ENCODE measurements at regions of chr12 and their contacts with region 1.

Region 1: GRCh38 chr12:116708826-116709756 is 28.8 kb downstream of the SPRING1 start:
- DNase-seq: peak in 3 of 5 donors; percentile 37 to 58 (median 44)
- ATAC-seq: peak in 3 of 4 donors; percentile 79 to 87 (median 84)
- H3K4me3 ChIP-seq: peak overlapping the region in 2 of 12 donors; percentile 10 to 15
- H3K27ac ChIP-seq: no peak overlapping the region
- H3K4me1 ChIP-seq: peaks cover 0 to 20% (median 8%) of the 10 kb centered on the region in 12 donors
- H3K27me3 ChIP-seq: peaks cover 0 to 6% (median 0%) of the 10 kb centered on the region in 9 donors
- CTCF ChIP-seq: peak; percentile 47 to 72 (median 62)
- POLR2A ChIP-seq: no peak

Region 2: DNA sequence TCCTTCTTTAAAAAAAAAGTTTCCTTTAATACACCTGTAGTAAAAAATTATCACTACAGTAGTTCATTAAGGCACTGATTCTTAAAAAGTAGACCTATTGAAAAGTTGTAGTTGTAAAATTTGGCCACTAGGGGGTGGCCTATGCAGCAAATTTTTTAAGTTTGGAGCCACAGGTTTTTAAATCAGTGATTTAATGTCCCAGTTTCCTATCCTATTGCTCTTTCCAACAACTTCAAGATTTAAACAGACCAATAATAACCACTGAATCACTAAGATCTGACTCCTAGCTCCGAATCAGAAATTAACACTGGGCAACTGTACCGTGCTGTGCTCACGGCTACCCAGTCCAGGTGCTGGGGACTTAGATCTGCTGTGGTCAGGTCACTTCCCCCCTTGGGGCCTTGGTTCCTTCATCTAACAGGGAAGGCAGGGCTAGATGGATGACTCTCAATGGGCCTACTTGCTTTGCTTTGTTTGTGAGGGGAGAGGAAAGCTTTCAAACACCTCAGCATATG is 710.9 kb before region 1 on chr12:
- intact Hi-C with region 1: loop called in 5 of 10 experiments (anchors 5 to 10 kb)
- DNase-seq: no peak
- ATAC-seq: peak in 2 of 4 donors; percentile 39 to 53
- H3K4me3 ChIP-seq: no peak overlapping the region
- H3K27ac ChIP-seq: peak overlapping the region in 2 of 12 donors; percentile 1 to 11
- H3K4me1 ChIP-seq: peaks cover 0 to 13% (median 3%) of the 10 kb centered on the region in 12 donors
- H3K27me3 ChIP-seq: no peaks in the 10 kb centered on the region
- CTCF ChIP-seq: peak; percentile 76 to 97 (median 86)
- POLR2A ChIP-seq: no peak

Region 3: DNA sequence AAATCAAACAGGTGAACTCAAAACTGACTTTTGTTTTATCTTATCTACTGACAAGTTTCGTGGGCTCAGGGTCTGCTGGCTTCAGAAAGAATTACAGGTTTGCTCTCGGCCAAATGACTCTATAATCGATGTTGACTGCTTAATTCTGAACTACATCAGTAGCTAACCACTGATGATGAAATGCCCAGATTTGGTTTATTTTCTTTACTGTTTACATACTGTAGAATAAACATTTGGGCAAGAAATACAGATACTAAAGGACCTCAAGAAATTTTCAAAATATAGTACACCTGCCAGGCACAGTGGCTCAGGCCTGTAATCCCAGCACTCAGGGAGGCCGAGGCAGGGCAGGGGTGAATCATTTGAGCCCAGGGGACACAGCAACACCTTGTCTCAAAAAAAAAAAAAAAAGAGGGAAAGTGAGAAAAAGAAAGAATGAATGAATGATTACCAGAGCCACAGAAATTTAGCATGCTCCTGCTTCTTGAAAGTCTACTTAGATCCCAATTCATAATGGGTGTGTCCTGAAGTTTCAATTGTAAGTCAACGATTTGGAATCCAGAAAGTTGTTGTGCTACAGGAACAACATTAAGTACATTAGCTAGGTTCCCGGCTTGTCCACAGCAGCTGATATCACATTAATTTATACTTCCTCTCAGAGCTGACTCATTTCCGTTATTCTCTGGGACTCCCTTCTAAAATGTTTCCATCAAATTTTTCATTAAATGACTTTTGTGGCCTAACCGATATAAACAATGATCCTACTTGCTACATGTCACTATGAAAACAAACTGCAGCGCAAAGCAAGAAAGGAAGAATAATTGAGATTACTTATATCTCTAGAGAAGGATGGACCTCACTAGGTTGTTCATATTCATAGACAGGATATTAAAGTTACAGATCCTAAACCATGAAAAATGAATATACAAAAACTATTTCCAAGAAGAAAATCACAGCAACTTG is 565.9 kb before region 1 on chr12:
- intact Hi-C with region 1: loop called in 1 of 10 experiments (anchors 5 kb)
- DNase-seq: no peak
- ATAC-seq: peak in 2 of 4 donors; percentile 27 to 29
- H3K4me3 ChIP-seq: no peak overlapping the region
- H3K27ac ChIP-seq: peak overlapping the region in 7 of 12 donors; percentile 1 to 60 (median 31)
- H3K4me1 ChIP-seq: peaks cover 4 to 79% (median 52%) of the 10 kb centered on the region in 12 donors
- H3K27me3 ChIP-seq: no peaks in the 10 kb centered on the region
- CTCF ChIP-seq: no peak
- POLR2A ChIP-seq: no peak

Measured in heart left ventricle (tissue), 16 donors.